Ovary (tissue), 10 donors: ENCODE measurements at regions of chr17 and their contacts with region 1.

Region 1: DNA sequence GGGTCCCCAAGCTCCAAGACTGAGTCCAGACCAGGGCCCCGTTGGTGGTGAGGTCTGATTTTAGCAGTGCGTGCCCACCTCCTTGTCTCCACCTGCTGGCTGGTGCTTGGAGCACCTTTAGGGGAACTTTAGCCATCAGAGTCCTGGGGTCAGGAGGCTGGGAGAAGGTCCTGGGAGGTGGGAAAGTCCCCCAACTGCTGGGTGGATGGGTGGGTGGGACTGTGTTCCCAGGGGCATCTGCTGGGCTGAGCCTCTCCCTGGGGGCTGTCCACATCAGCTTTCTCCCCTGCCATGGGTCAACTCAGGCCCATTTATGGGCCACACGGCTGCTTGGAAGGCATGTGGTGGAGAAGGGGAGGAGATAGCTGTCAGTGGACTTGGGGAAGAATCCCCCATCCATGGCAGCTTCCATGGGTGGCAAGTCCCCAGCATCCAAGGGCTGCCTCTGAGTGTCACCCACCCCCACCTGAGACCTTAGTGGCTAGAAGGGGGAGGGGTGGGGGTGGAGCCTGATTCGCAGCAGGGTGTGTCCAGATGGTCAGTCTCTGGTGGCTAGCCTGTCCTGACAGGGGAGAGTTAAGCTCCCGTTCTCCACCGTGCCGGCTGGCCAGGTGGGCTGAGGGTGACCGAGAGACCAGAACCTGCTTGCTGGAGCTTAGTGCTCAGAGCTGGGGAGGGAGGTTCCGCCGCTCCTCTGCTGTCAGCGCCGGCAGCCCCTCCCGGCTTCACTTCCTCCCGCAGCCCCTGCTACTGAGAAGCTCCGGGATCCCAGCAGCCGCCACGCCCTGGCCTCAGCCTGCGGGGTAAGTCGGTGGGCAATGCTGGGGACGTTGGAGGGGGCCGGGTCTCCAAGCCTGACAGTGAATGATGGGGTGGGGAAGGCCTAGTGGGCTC is at the start of gene TRPV2:
- DNase-seq: peak in 2 of 5 donors; percentile 48 to 59
- H3K4me3 ChIP-seq: peak within 1 kb of the TSS; percentile 23
- H3K27ac ChIP-seq: peak within 1 kb of the TSS; percentile 62 to 84
- H3K4me1 ChIP-seq: peaks cover 5% of the 10 kb centered on the region
- H3K27me3 ChIP-seq: no peaks in the 10 kb centered on the region
- CTCF ChIP-seq: no peak
- EP300 ChIP-seq: no peak
- POLR2A ChIP-seq: no peak
- total RNA-seq, gene TRPV2: 8.7 to 40.4 (median 13.0) TPM

Region 2: DNA sequence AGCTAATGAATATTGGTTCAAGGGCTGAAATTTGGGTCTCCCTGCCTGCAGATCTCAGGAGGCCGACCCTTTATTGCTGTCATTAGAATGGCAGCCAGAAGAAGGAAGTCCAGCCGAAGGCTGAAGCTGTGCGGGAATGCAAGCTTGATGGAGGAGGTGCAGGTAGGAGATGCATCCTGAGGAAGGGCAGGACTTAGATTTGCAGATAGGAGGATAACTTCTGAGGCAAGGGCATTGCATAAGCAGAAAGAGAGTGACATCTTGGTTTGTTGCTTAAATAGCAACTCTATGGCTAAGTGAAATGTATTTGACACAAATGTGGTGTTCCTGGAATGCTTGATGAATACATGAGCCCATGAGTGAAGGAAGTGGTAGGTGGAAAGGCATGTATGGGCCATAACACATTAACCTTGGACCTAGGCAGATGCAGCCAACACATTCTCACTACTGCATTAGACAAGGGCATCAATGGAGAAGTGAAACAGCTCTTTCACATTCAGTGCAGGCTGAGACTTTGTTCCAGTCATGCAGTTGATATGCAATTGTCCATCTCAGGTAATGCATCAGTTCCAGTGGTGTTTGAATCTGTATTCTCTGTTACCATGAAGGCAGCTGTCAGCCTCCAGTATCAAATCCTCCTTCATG is 1980.9 kb before region 1 on chr17:
- intact Hi-C with region 1: loop called in 1 of 4 experiments (anchors 10 kb)
- DNase-seq: no peak
- H3K4me3 ChIP-seq: no peak overlapping the region
- H3K27ac ChIP-seq: no peak overlapping the region
- H3K4me1 ChIP-seq: no peaks in the 10 kb centered on the region
- H3K27me3 ChIP-seq: no peaks in the 10 kb centered on the region
- CTCF ChIP-seq: no peak
- EP300 ChIP-seq: no peak
- POLR2A ChIP-seq: no peak